ENCODE measurements at regions of chr4 and their contacts with region 1.

Region 1: DNA sequence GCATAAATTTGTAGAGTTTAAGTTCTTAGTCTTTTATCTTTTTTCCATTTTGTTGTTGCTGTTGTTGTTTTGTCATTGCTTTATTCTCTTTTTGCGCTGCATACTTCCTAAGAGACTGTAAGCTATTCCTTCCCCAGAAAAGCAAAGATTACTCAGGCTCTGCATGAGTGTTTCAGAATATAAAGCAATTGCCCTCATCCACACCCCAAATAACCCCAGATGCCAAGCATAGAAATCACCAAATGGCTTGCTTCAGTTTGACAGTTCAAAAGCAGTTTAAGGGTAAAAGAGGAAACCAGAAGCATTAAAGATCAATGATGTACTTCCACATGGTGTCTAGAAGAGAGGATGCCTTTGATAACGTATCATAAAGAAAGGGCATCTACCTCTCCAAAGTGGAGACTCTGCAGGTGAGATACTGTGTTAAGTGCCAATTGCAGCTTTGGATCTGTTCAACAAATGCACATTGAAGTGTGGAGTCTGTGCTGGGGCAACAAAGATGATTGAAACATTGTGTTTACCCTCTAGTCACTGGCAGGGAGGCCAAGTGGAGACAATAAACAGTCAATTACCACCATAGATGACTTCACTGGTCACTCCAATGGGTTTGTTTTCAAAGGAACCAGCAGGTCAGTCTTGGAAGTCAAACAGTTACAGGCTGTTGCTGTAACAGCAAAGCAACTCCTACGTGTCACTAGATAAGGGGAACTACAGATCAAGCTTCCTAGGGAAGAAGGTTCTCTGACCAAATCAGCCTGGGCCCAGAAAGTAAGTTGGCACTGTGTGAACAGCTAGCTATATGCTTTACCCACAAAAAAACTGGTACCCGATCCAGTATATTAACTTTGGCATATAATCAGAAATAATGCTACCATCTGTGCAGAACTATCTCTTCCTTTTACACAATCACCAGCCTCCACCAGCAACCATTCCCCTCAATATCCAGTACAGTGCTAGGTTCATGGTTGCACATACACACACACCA is 40.6 kb upstream of the IL21 start:
- DNase-seq: peak in 1 of 9 donors; percentile 1
- ATAC-seq: no peak
- H3K4me3 ChIP-seq: no peak overlapping the region
- H3K4me3 Mint-ChIP-seq: peak overlapping the region in 1 of 10 donors; percentile 19
- H3K27ac ChIP-seq: no peak overlapping the region
- H3K27ac Mint-ChIP-seq: peak overlapping the region in 3 of 9 donors; percentile 4 to 58 (median 38)
- H3K4me1 ChIP-seq: peaks cover 0 to 3% of the 10 kb centered on the region in 2 donors
- H3K4me1 Mint-ChIP-seq: peaks cover 6 to 80% (median 22%) of the 10 kb centered on the region in 7 donors
- H3K27me3 ChIP-seq: no peaks in the 10 kb centered on the region
- H3K27me3 Mint-ChIP-seq: no peaks in the 10 kb centered on the region

Region 2: DNA sequence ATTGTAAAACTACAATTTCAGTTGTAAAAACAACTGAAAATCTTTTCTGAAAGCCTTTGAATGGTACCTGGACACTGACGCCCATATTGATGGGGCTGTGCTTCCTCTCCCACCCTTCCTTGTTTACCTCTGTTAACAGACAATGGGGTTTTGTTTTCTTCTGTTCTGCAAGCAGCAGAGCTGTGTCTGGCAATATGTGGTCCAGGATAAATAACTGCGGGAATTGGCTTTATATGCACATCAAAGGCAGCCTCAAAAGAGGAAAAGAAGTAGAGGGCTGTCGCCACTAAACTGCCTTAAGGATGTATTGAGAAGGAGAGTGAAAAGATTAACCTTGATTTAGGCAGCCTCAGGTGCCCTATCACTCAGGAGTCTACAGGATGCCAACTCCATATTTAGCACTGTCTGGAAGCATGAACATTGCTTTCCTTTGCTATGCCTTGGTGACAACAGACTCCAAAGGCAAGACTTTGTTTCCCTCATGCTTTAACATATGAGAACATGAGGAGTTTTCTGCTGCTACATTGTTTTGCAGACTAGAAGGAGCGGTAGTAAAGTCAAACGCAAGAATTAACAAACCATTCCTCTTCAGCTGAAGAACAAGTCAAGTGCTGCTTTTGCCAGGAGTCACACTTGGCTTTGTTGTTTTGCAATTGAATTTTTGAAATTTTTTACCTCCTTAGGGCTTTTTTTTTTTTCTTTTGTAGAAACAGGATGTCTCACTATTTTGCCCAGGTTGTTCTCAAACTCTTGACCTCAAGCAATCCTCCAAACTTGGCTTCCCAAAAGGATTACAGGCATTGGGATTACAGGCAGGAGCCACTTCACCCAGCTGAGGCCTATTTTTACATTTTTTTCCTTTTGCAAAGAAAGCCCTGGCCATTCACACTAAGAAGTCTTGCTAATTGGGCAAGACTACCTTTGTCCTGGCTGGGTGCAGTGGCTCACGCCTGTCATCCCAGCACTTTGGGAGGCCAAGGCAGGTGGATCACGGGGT is 43.6 kb before region 1 on chr4:
- CTCF ChIA-PET with region 1: no interaction called
- POLR2A ChIA-PET with region 1: no interaction called
- intact Hi-C with region 1: loop called in 1 of 2 experiments (anchors 5 kb)
- DNase-seq: no peak
- ATAC-seq: no peak
- H3K4me3 ChIP-seq: no peak overlapping the region
- H3K4me3 Mint-ChIP-seq: peak overlapping the region in 7 of 10 donors; percentile 1 to 73 (median 45)
- H3K27ac ChIP-seq: no peak overlapping the region
- H3K27ac Mint-ChIP-seq: peak overlapping the region in 7 of 9 donors; percentile 2 to 85 (median 52)
- H3K4me1 ChIP-seq: no peaks in the 10 kb centered on the region
- H3K4me1 Mint-ChIP-seq: peaks cover 0 to 51% (median 23%) of the 10 kb centered on the region in 7 donors
- H3K27me3 ChIP-seq: no peaks in the 10 kb centered on the region
- H3K27me3 Mint-ChIP-seq: no peaks in the 10 kb centered on the region

Region 3: GRCh38 chr4:122700178-122700725 is 38.8 kb after region 1 on chr4:
- CTCF ChIA-PET with region 1: no interaction called
- POLR2A ChIA-PET with region 1: no interaction called
- intact Hi-C with region 1: no loop called
- DNase-seq: no peak
- ATAC-seq: no peak
- H3K4me3 ChIP-seq: no peak overlapping the region
- H3K4me3 Mint-ChIP-seq: peak overlapping the region in 1 of 10 donors; percentile 35
- H3K27ac ChIP-seq: no peak overlapping the region
- H3K27ac Mint-ChIP-seq: peak overlapping the region in 1 of 9 donors; percentile 66
- H3K4me1 ChIP-seq: no peaks in the 10 kb centered on the region
- H3K4me1 Mint-ChIP-seq: peaks cover 0 to 43% (median 5%) of the 10 kb centered on the region in 7 donors
- H3K27me3 ChIP-seq: no peaks in the 10 kb centered on the region
- H3K27me3 Mint-ChIP-seq: peaks cover 0 to 4% (median 0%) of the 10 kb centered on the region in 5 donors

Measured in naive thymus-derived CD4-positive, alpha-beta T cell (primary cell).